AG04449 (cell line): ENCODE measurements at regions of chr11 and their contacts with region 1.

Region 1: DNA sequence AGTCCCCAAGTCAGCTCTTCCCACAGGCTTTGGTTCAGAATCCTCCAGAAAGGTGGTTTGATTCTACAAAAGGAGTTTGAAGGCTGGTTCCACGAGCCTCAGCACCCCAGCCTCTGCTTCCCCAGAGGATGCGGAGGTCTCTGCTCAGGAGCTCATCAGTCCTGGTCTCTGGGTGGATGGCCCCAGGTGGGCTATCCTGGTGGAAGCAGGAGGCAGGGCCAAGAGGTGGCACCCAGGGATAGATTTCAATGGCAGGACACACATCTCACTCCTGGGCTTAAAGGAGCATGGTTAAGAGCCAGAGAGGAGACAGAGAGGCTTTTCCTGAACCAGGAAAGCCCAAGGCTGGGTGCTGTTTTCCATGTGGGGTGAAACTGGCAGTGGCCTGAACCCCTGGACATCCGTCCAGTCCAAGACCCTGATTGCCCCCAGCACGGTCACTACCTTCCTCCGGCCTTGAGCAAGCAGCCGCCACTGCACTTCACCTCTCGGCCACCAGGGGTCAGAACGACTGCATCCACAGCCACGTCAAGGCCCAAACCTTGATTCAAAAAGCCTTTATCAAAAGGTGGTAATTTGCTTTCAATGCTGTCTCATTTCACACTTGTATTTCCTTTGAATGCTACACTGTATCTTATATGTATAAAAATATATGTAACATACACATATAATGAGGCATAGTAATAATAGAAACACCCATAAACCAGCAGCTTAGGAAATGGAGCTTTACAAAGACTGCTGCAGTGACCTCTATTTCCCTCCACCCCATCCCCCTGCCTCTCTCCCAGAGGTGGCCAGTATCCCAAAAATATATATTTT is 19.3 kb upstream of the FXYD2 start:
- DNase-seq: no peak
- H3K4me3 ChIP-seq: no peak overlapping the region
- CTCF ChIP-seq: peak; percentile 96

Region 2: DNA sequence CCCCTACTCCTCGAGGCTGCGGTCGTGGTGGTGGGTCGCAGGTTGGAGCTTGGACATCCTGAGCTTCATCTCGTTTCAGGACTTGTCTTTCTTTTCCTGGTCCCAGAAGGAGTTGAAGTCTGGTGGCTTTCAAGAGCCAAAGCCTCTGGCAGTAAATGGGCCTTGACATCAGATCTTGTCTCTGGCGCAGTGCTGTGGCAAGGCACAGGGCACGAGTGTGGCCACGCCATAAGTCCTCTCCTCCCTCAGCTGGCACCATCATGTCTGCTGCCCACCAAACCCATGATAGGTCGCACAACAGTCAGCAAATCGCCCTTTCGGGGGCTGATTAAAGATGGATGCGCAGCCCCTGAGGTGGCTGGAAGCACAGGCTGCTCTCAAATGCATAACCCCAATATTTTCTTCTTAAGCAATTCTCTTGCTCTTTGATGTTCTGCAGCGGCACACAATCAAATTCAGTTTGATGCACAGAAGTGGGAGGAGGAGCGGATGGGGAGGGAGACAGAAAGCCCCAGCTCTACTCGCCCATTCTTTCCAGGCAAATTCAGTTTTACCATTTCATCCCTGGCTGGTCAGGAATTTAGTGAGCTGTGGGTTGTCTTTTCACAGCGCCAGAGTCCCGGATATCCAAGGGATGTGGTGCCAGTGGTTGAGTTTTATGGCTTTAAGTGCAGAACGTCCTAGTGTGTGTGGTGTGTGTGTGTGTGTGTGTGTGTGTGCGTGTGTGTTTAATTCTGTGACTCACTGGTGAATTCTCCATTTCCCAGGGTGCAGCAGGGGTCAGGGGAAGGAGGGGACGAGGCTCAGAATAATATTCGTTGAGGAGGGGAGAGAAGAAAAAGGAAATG is 208.9 kb before region 1 on chr11:
- CTCF ChIA-PET with region 1: no interaction called
- POLR2A ChIA-PET with region 1: no interaction called
- DNase-seq: no peak
- H3K4me3 ChIP-seq: no peak overlapping the region
- CTCF ChIP-seq: no peak

Region 3: DNA sequence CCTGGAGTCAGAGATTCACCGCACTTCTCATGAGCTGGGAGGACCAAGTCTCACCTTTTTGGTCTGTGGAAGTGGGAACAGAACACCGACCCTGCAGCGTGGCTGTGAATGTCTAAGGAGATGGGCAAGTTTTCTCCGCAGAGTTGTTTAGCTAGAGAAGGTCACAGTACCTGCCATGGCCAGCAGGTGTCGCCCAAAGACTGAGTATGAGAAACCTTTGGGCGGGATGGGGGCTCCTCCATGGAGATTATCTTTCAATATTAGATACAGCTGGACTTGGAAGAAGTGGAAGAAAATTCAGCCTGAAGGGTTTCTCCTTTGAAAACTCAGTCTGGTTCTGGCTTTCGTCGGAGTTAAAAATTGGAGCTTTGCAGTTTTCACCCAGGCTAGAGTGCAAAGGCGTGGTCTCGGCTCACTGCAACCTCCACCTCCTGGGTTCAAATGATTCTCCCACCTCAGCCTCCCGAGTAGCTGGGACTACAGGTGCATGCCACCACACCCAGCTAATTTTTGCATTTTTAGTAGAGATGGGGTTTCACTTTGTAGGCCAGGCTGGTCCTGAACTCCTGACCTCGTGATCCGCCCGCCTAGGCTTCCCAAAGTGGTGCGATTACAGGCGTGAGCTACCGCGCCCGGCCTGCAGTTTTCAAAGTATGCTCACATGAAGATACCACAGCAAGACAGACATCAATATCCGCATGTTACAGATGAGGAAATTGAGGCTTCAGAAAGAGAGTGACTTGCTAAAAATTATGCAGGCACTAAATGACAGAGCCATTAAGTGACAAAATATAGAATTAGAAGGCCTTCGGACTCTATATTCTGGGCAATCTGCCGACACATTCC is 36.2 kb before region 1 on chr11:
- CTCF ChIA-PET with region 1: interaction called, 15 read pairs
- POLR2A ChIA-PET with region 1: no interaction called
- DNase-seq: no peak
- H3K4me3 ChIP-seq: no peak overlapping the region
- CTCF ChIP-seq: peak; percentile 82

Region 4: GRCh38 chr11:117828611-117829368 is 15.1 kb before region 1 on chr11:
- CTCF ChIA-PET with region 1: interaction called, 43 read pairs
- POLR2A ChIA-PET with region 1: no interaction called
- DNase-seq: no peak
- H3K4me3 ChIP-seq: no peak overlapping the region
- CTCF ChIP-seq: no peak

Region 5: GRCh38 chr11:117907251-117907981 is 63.5 kb after region 1 on chr11:
- CTCF ChIA-PET with region 1: interaction called, 31 read pairs
- POLR2A ChIA-PET with region 1: no interaction called
- DNase-seq: peak; percentile 26
- H3K4me3 ChIP-seq: no peak overlapping the region
- CTCF ChIP-seq: no peak

Region 6: DNA sequence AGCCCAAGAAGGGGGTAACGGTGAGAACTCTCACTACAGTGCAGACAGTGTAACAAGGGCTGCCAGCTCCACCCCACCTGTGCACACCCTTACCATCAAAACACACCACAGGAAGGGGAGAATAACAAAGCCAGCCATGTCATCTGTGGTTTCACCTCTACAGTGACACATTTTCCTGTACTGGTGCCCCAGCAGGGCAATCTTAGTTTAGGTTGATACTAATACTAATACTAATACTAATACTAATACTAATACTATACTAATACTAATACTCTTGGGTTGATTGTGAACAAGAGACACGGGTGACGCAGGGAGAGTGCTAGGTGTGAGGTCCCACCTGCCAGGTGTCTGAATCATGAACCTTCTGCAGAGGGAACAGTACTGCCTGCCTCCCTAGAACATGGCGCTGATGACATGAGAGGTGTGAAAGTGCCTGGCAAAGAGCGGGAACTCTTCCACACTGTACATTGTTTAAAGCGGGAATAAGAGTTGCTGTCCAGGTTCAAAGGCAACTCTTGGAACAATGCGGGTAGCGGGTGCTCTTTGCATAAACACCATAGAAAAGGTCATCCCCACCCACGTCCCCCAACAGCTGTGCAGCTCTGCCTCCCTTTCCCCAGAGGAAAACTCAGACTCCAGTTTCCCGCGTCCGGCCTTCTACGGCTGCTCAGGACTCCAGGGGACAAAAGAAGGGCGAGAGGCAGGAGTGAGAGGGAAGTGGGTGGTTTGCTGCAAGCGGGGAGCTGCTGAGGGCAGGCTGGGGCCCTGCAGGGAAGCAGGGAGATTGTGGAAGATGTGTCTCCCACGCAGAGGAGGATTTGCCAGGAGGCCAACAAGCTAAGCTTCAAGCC is 208.0 kb after region 1 on chr11:
- CTCF ChIA-PET with region 1: interaction called, 11 read pairs
- POLR2A ChIA-PET with region 1: no interaction called
- DNase-seq: no peak
- H3K4me3 ChIP-seq: no peak overlapping the region
- CTCF ChIP-seq: no peak